ENCODE measurements at regions of chr7 and their contacts with region 1.

Region 1: GRCh38 chr7:128135515-128136214 is 104.4 kb upstream of the LRRC4 start:
- DNase-seq: no peak
- H3K4me3 ChIP-seq: peak overlapping the region; percentile 49
- H3K27me3 ChIP-seq: peaks cover 17% of the 10 kb centered on the region
- CTCF ChIP-seq: peak; percentile 66

Region 2: GRCh38 chr7:127708788-127709187 is 426.9 kb before region 1 on chr7:
- CTCF ChIA-PET with region 1: interaction called, 26 read pairs
- POLR2A ChIA-PET with region 1: no interaction called
- DNase-seq: peak; percentile 86
- H3K4me3 ChIP-seq: no peak overlapping the region
- H3K27me3 ChIP-seq: no peaks in the 10 kb centered on the region
- CTCF ChIP-seq: peak; percentile 66

Region 3: GRCh38 chr7:127844707-127845331 is 290.8 kb before region 1 on chr7:
- CTCF ChIA-PET with region 1: no interaction called
- POLR2A ChIA-PET with region 1: no interaction called
- DNase-seq: no peak
- H3K4me3 ChIP-seq: no peak overlapping the region
- H3K27me3 ChIP-seq: no peaks in the 10 kb centered on the region
- CTCF ChIP-seq: no peak

Region 4: DNA sequence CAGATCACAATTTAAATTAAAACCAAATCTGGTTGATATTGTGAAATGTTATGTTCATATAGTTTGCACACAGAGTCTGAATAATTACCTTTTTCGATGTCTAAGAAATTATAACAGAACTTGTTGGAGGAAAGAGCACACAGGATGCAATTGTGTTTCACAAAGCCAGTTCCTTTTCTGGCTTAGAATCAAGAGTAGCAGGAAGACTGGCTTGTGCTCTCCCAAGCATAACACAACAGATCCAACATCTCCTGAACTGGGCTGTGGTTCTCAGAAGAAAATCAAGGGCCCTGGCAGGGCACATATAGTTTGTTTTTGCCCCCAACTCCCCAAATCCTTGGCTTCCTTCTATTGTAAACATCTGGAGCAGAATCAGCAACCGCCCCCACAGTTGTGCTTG is 167.1 kb before region 1 on chr7:
- CTCF ChIA-PET with region 1: no interaction called
- POLR2A ChIA-PET with region 1: no interaction called
- DNase-seq: no peak
- H3K4me3 ChIP-seq: no peak overlapping the region
- H3K27me3 ChIP-seq: no peaks in the 10 kb centered on the region
- CTCF ChIP-seq: no peak

Region 5: GRCh38 chr7:128161466-128162125 is 25.9 kb after region 1 on chr7:
- CTCF ChIA-PET with region 1: interaction called, 20 read pairs
- POLR2A ChIA-PET with region 1: no interaction called
- DNase-seq: no peak
- H3K4me3 ChIP-seq: no peak overlapping the region
- H3K27me3 ChIP-seq: peaks cover 26% of the 10 kb centered on the region
- CTCF ChIP-seq: no peak

Region 6: GRCh38 chr7:128178611-128179010 is 42.9 kb after region 1 on chr7:
- CTCF ChIA-PET with region 1: interaction called, 11 read pairs
- POLR2A ChIA-PET with region 1: no interaction called
- DNase-seq: no peak
- H3K4me3 ChIP-seq: no peak overlapping the region
- H3K27me3 ChIP-seq: peaks cover 12% of the 10 kb centered on the region
- CTCF ChIP-seq: no peak

Region 7: DNA sequence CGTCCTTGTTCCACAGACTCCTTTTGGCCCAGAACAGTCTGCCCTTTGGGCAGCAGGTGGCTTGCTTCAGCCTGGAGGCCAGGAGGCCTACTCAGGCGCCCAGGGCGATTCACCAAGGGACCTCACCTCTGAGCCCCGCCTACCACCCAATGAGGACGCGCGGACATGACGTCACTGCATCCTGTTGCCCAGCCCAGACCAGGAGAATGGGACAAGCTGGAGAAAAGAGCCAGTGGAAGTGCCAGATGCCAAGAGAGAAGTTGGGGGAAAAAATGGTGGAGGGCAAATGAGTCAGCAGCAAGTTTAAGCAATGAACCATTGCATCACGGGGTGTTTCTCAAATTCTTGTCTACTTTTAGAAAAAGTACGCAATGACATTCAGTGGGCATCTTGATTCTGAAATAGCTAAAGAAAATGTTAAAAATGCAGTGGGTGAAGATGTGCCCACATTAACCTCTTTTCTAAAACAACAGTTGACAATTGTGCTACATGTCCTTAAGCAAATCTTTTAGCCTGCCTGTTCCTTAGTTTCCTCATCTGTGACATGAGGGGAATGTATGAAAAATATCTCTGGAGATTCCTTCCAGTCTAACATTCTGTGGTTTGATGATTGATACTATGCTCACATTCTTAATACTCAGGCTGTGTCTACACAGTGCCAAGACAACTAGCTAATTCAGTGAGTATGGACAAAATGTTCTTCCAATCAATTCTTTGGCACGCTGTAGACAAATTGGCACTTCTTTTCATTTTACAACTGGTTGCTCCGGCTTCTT is 81.6 kb after region 1 on chr7:
- CTCF ChIA-PET with region 1: interaction called, 14 read pairs
- POLR2A ChIA-PET with region 1: no interaction called
- DNase-seq: peak; percentile 34
- H3K4me3 ChIP-seq: no peak overlapping the region
- H3K27me3 ChIP-seq: no peaks in the 10 kb centered on the region; the same call in 1 of the 2 replicates
- CTCF ChIP-seq: no peak

Measured in BJ (cell line).